ENCODE measurements at regions of chr19 and their contacts with region 1.

Region 1: GRCh38 chr19:39846176-39846677 is at the start of gene FBL:
- DNase-seq: peak; percentile 98

Region 2: GRCh38 chr19:39792999-39793546 is 53.2 kb before region 1 on chr19:
- CTCF ChIA-PET with region 1: interaction called, 28 read pairs
- POLR2A ChIA-PET with region 1: interaction called, 8 read pairs
- DNase-seq: peak; percentile 81

Region 3: DNA sequence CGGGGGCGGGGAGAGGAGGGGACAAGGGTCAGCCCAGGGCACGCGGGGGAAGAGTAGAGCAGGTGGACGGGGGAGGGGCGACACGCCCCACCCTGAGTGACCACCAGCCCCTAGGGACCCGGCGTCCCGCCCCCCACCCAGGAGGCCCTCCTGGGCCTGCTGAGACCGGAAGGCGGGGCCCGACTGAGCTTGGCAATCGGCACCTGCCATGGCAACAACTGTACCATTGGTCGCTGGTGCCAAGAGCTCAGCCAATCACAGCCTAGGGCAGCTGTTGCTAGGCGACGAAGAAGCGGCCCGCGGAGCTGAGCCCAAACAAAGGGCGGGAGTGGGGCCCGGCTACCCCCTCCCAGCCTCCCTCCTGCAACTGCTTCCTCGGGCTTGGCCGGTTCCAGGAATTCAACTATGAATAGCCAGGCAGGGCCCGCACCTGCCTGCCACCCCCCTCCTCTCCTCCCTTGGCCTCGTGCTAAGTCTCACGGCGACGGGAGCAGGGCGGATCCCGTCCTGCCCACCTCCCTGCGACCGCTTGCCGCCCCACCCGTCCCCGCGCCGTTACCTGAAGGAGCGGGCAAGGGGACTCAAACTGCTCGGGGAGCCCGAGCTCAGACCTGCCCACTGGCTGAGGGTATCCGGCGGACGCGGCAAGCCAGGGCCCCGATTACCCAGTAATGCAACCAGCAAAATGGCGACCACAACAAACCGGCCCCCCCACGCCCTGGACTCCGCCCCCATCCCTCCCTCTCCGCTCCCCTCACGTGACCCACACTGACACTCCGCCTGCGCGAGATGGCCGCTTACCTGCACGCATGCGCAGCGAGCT is 12.6 kb before region 1 on chr19 and contains the start of gene DYRK1B:
- CTCF ChIA-PET with region 1: interaction called, 22 read pairs
- POLR2A ChIA-PET with region 1: interaction called, 27 read pairs
- DNase-seq: peak; percentile 97

Region 4: DNA sequence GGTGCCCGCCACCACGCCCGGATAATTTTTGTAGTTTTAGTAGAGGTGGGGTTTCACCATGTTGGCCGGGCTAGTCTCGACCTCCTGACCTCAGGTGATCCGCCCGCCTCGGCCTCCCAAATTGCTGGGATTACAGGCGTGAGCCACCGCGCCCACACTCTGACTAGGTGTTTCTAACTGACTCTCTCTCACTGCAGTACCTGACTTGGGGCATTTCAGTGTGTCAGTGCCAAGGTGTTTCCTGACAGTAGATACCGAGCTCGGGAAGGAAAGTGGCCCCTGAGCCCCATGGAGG is 45.0 kb after region 1 on chr19:
- CTCF ChIA-PET with region 1: no interaction called
- POLR2A ChIA-PET with region 1: no interaction called
- DNase-seq: no peak

Region 5: DNA sequence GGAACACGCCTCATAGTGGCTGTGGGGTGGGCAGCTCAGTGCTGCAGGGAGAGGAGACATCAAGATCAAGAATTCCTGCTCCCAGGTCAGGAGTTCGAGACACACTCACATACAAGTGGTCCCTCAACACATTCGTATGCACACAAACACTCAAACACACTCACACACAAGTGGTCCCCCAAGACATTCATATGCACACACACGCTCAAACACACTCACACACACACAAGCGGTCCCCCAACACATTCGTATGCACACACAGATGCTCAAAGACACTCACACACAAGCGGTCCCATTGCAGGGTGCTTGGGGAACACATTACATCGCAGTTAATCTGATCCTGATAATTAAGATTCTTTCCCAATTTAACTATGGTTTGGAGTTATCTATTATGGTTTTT is 60.1 kb after region 1 on chr19:
- CTCF ChIA-PET with region 1: no interaction called
- POLR2A ChIA-PET with region 1: no interaction called
- DNase-seq: no peak

Region 6: GRCh38 chr19:39916851-39917396 is 70.7 kb after region 1 on chr19:
- CTCF ChIA-PET with region 1: no interaction called
- POLR2A ChIA-PET with region 1: no interaction called
- DNase-seq: no peak

Region 7: GRCh38 chr19:39970675-39971379 is 124.6 kb after region 1 on chr19 and contains the start of gene PSMC4:
- CTCF ChIA-PET with region 1: interaction called, 3 read pairs
- POLR2A ChIA-PET with region 1: interaction called, 14 read pairs
- DNase-seq: peak; percentile 97

Measured in HEK293T (cell line).